ENCODE measurements at regions of chr6 and their contacts with region 1.

Region 1: DNA sequence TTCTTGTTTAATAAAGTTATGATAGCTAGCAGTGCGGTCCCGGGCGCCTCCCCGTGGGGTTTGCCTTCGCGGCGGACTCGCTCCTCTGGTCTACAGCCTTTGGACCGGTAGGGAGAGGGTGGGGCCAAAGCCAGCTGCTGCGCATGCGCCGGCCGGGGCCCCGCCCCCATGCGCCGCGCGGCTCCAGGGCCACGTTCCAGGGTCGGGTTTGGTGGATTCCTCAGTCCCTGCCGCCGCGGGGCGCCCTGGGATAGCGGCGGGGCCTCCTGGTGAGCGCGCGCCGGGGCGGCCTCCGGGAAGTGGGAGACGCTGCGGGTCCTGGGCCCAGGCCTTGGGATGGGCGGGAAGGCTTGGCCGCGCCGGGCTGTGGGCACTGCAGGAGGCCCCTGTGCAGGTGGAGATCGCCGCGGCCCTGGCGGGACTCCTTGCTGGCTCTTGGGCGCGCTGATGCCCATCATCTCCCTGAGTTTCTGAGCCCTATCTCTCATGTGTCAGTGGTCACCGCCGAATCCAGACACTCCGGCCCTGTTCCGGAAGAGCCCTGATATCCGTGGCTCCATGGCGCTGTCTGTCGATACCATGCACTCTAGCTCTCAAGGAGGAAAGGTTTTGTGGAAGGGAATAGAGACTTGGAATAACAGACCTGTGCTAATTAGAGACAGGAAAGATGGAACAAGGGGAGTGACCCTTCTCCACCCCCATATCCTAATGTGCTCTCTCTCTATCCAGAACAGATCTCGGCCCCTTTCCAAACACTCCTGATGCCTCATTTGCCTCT is at the start of gene VARS2:
- DNase-seq: peak; percentile 94
- H3K4me3 ChIP-seq: peak within 1 kb of the TSS; percentile 23 to 65 (median 50)
- H3K27ac ChIP-seq: peak within 1 kb of the TSS; percentile 55
- H3K4me1 ChIP-seq: peaks cover 26% of the 10 kb centered on the region
- H3K27me3 ChIP-seq: no peaks in the 10 kb centered on the region
- CTCF ChIP-seq: peak; percentile 26 to 59
- total RNA-seq, gene VARS2: 17.7 to 25.7 TPM

Region 2: GRCh38 chr6:30705620-30706019 is 208.6 kb before region 1 on chr6:
- CTCF ChIA-PET with region 1: interaction called, 23 read pairs
- dilution Hi-C with region 1: no loop called
- in situ Hi-C with region 1: no loop called
- intact Hi-C with region 1: no loop called
- DNase-seq: no peak
- H3K4me3 ChIP-seq: no peak overlapping the region
- H3K27ac ChIP-seq: no peak overlapping the region
- H3K4me1 ChIP-seq: no peaks in the 10 kb centered on the region
- H3K27me3 ChIP-seq: no peaks in the 10 kb centered on the region
- CTCF ChIP-seq: no peak

Region 3: DNA sequence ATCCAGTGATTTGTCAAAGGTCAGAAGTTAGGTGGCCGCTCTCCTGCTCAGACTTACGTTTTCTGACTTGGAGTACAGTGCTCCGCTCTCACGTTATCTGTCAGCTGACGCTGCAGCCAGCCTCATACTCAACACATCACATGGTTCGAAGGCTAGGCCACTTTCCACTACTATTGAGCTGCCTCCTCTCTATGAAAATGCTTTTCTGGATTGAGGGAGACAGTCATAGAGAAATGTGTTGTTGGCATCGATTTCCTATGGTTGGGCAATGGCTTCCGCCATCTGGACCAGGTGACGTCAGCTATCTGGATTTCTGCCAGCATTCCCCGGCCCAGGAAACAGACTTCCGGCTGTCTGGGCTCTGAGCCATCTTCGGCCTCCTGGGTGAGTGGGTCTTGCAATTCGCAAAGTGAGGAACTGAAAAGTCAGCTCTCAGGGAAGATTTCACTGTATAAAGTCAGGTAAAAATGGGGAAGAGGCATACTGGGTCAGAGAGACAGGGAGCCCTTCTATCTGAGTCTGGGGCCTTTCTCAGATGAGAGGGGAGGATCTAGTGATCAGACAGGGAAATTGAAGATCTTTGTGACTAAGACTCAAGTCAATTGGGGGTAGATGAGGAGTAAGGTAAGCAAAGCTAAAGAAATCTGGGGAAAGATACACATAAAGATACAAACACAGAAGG is 132.4 kb before region 1 on chr6:
- CTCF ChIA-PET with region 1: no interaction called
- dilution Hi-C with region 1: no loop called
- in situ Hi-C with region 1: no loop called
- intact Hi-C with region 1: no loop called
- DNase-seq: peak; percentile 97
- H3K4me3 ChIP-seq: no peak overlapping the region
- H3K27ac ChIP-seq: peak overlapping the region; percentile 97
- H3K4me1 ChIP-seq: peaks cover 36% of the 10 kb centered on the region
- H3K27me3 ChIP-seq: no peaks in the 10 kb centered on the region
- CTCF ChIP-seq: no peak

Region 4: GRCh38 chr6:30862156-30862875 is 51.9 kb before region 1 on chr6:
- CTCF ChIA-PET with region 1: no interaction called
- dilution Hi-C with region 1: loop called (anchors 5 kb)
- in situ Hi-C with region 1: no loop called
- intact Hi-C with region 1: no loop called
- DNase-seq: no peak
- H3K4me3 ChIP-seq: no peak overlapping the region
- H3K27ac ChIP-seq: no peak overlapping the region
- H3K4me1 ChIP-seq: no peaks in the 10 kb centered on the region
- H3K27me3 ChIP-seq: no peaks in the 10 kb centered on the region
- CTCF ChIP-seq: no peak

Region 5: GRCh38 chr6:30942338-30943060 is 28.2 kb after region 1 on chr6:
- CTCF ChIA-PET with region 1: no interaction called
- dilution Hi-C with region 1: no loop called
- in situ Hi-C with region 1: no loop called
- intact Hi-C with region 1: loop called (anchors 1 kb)
- DNase-seq: peak; percentile 66
- H3K4me3 ChIP-seq: no peak overlapping the region
- H3K27ac ChIP-seq: no peak overlapping the region
- H3K4me1 ChIP-seq: peaks cover 21% of the 10 kb centered on the region
- H3K27me3 ChIP-seq: no peaks in the 10 kb centered on the region
- CTCF ChIP-seq: peak; percentile 48 to 71

Region 6: DNA sequence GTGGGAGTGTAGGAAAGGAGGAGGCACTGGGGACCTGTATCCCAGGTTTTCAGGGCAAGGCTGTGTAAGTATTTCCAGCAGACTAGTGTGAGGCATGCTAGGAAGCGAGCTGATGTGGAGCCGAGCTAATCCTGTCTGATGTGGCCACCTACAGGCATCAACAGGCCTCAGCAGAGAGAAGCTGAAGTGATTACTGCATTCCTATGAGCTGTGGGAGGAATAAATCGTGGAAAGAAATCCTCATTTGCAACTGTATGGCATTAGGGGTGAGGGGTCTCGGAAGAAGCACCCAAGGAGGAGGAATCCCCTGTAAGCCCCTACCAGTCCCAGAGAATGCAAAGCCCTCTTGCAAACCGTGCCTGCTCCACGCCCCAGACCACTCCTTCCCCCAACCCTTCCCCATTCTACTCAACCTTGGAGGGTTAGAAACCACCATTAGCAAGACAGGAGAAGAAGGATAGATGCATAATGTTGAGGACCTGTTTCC is 156.5 kb after region 1 on chr6:
- CTCF ChIA-PET with region 1: interaction called, 42 read pairs
- dilution Hi-C with region 1: loop called (anchors 5 kb)
- in situ Hi-C with region 1: loop called (anchors 5 kb)
- intact Hi-C with region 1: loop called (anchors 1 kb)
- DNase-seq: peak; percentile 74
- H3K4me3 ChIP-seq: no peak overlapping the region
- H3K27ac ChIP-seq: no peak overlapping the region
- H3K4me1 ChIP-seq: peaks cover 4% of the 10 kb centered on the region
- H3K27me3 ChIP-seq: no peaks in the 10 kb centered on the region
- CTCF ChIP-seq: peak; percentile 87 to 93

Region 7: GRCh38 chr6:31114970-31115849 is 200.9 kb after region 1 on chr6:
- CTCF ChIA-PET with region 1: interaction called, 5 read pairs
- dilution Hi-C with region 1: no loop called
- in situ Hi-C with region 1: no loop called
- intact Hi-C with region 1: loop called (anchors 1 kb)
- DNase-seq: peak; percentile 24
- H3K4me3 ChIP-seq: peak overlapping the region; percentile 31 to 52 (median 39)
- H3K27ac ChIP-seq: peak overlapping the region; percentile 91
- H3K4me1 ChIP-seq: peaks cover 39% of the 10 kb centered on the region
- H3K27me3 ChIP-seq: no peaks in the 10 kb centered on the region
- CTCF ChIP-seq: peak in 1 of 2 donors; percentile 52

Measured in mammary epithelial cell (primary cell).